Activated CD4-positive, alpha-beta T cell treated with anti-CD3 and anti-CD28 coated beads for 36 hours (primary cell): ENCODE measurements at regions of chr16 and their contacts with region 1.

Region 1: DNA sequence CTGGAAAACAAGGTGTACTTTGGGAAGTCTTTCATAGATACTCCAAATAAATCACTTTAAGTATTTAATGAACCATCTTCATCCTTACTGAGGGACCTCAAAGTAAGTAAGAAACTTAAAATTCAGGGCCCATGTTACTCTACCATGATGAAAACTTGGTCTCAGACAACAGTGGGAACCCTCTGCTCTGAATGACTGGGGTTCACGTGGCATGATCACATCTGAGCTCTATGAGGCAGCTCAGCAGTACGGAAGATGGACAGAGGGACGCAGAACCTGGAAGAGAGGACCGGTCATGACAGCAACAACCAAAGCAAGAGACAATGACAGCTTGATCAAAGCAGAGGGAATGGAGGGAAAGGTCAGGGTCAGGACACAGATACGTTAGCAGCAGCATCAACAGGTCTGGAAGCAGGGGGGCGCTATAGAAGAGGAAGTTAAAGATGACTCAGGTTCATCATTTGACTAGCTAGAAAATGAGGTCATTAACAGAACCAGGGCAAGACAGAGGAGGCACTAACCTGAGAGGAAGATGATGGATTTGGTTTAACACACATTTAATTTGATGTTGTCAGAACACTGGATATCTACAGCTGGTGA is 9.5 kb downstream of the XPO6 start:
- DNase-seq: peak; percentile 76
- ATAC-seq: peak; percentile 98
- H3K4me3 Mint-ChIP-seq: peak overlapping the region; percentile 6
- H3K27ac Mint-ChIP-seq: no peak overlapping the region
- H3K4me1 Mint-ChIP-seq: peaks cover 28% of the 10 kb centered on the region
- H3K27me3 Mint-ChIP-seq: no peaks in the 10 kb centered on the region

Region 2: GRCh38 chr16:28166394-28167208 is 35.6 kb before region 1 on chr16:
- CTCF ChIA-PET with region 1: interaction called, 3 read pairs
- POLR2A ChIA-PET with region 1: interaction called, 3 read pairs
- intact Hi-C with region 1: loop called in 1 of 2 experiments (anchors 2 kb)
- DNase-seq: peak; percentile 53
- ATAC-seq: peak; percentile 92
- H3K4me3 Mint-ChIP-seq: no peak overlapping the region
- H3K27ac Mint-ChIP-seq: peak overlapping the region; percentile 67
- H3K4me1 Mint-ChIP-seq: peaks cover 83% of the 10 kb centered on the region
- H3K27me3 Mint-ChIP-seq: no peaks in the 10 kb centered on the region

Region 3: DNA sequence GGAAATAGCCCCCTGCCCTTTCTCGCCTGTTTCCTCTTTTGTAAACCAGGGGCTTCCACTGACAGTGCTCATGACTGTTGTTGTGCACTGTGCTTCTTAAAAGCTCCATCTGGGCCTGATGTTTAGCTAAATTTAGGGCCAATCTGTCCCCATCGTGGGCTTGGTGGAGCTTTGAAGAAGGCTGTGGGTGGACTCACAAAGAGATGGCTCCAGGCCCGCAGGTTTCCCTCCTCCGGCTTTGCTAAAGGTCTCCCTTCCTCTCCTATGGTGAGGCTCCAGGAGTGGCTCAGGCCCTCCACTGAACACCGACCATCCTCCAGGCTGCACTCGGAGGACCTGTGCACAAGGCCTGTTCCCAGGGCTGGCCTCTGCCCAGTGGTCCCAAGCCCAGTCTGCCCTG is 39.7 kb after region 1 on chr16:
- CTCF ChIA-PET with region 1: no interaction called
- POLR2A ChIA-PET with region 1: no interaction called
- intact Hi-C with region 1: no loop called
- DNase-seq: no peak
- ATAC-seq: no peak
- H3K4me3 Mint-ChIP-seq: no peak overlapping the region
- H3K27ac Mint-ChIP-seq: no peak overlapping the region
- H3K4me1 Mint-ChIP-seq: no peaks in the 10 kb centered on the region
- H3K27me3 Mint-ChIP-seq: no peaks in the 10 kb centered on the region

Region 4: GRCh38 chr16:28491970-28492474 is 289.8 kb after region 1 on chr16 and contains the start of gene CLN3:
- CTCF ChIA-PET with region 1: no interaction called
- POLR2A ChIA-PET with region 1: no interaction called
- intact Hi-C with region 1: no loop called
- DNase-seq: peak; percentile 94
- ATAC-seq: peak; percentile 64
- H3K4me3 Mint-ChIP-seq: peak within 1 kb of the TSS; percentile 94
- H3K27ac Mint-ChIP-seq: peak within 1 kb of the TSS; percentile 100
- H3K4me1 Mint-ChIP-seq: peaks cover 60% of the 10 kb centered on the region
- H3K27me3 Mint-ChIP-seq: no peaks in the 10 kb centered on the region
- total RNA-seq, gene CLN3: 19.0 to 24.6 TPM

Region 5: GRCh38 chr16:28513484-28514181 is 311.4 kb after region 1 on chr16:
- CTCF ChIA-PET with region 1: no interaction called
- POLR2A ChIA-PET with region 1: no interaction called
- intact Hi-C with region 1: no loop called
- DNase-seq: no peak
- ATAC-seq: no peak
- H3K4me3 Mint-ChIP-seq: no peak overlapping the region
- H3K27ac Mint-ChIP-seq: no peak overlapping the region
- H3K4me1 Mint-ChIP-seq: no peaks in the 10 kb centered on the region
- H3K27me3 Mint-ChIP-seq: no peaks in the 10 kb centered on the region